Caco-2 (cell line): ENCODE measurements at regions of chr10 and their contacts with region 1.

Region 1: DNA sequence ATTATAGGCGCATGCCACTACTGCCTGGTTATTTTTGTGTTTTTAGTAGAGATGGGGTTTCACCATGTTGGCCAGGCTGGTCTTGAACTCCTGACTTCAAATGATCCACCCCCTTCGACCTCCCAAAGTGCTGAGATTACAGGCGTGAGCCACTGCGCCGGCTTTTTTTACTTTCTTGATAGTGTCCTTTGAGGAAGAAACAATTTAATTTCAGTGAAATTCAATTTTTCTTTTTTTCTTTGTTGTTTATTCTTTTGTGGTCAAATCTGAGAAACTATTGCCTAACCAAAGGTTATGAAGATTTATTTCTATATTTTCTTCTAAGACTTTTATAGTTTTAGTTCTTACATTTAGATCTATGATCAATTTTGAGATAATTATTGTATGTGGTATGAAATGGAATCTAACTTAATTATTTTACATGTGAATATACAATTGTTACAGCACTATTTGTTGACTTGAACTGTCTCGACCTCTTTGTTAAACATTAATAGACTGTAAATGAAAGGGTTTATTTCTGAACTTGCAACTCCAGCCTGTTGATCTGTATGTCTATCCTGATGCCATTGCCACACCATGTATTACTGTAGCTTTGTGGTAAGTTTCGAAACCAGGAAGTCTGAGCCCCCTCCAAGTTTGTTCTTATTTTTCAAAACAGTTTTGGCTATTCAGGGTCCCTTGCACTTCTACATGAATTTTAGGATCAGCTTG is 19.8 kb upstream of the RASSF4 start:
- DNase-seq: peak; percentile 12 to 48
- H3K4me3 ChIP-seq: no peak overlapping the region
- H3K4me3 Mint-ChIP-seq: no peak overlapping the region
- H3K27ac Mint-ChIP-seq: no peak overlapping the region
- H3K4me1 ChIP-seq: peaks cover 10% of the 10 kb centered on the region; the same call in 1 of the 2 replicates
- H3K4me1 Mint-ChIP-seq: peaks cover 12% of the 10 kb centered on the region
- H3K27me3 ChIP-seq: no peaks in the 10 kb centered on the region
- H3K27me3 Mint-ChIP-seq: no peaks in the 10 kb centered on the region
- CTCF ChIP-seq: no peak

Region 2: DNA sequence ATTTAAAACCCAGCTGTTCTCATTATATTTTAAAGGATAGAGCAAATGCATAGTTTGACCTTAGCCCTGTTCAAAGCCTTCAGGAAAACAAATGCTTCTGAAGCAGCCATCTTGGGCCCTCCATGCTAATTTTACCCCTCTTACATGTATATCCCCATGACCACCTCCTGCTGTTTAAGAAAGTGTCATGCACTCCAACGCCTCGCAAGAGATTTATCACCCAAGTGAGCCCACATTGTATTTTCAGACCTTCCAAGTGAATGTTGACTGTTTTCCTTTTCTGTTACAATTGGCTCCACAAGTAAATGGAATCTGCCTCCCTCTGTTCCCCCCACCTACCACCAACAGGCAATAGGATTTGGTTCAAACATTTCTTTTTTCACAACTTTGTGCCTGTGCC is 23.4 kb before region 1 on chr10:
- CTCF ChIA-PET with region 1: no interaction called
- POLR2A ChIA-PET with region 1: no interaction called
- intact Hi-C with region 1: no loop called
- DNase-seq: no peak
- H3K4me3 ChIP-seq: no peak overlapping the region
- H3K4me3 Mint-ChIP-seq: no peak overlapping the region
- H3K27ac Mint-ChIP-seq: no peak overlapping the region
- H3K4me1 ChIP-seq: peaks cover 6% of the 10 kb centered on the region
- H3K4me1 Mint-ChIP-seq: no peaks in the 10 kb centered on the region
- H3K27me3 ChIP-seq: no peaks in the 10 kb centered on the region
- H3K27me3 Mint-ChIP-seq: peaks cover 8% of the 10 kb centered on the region
- CTCF ChIP-seq: no peak

Region 3: DNA sequence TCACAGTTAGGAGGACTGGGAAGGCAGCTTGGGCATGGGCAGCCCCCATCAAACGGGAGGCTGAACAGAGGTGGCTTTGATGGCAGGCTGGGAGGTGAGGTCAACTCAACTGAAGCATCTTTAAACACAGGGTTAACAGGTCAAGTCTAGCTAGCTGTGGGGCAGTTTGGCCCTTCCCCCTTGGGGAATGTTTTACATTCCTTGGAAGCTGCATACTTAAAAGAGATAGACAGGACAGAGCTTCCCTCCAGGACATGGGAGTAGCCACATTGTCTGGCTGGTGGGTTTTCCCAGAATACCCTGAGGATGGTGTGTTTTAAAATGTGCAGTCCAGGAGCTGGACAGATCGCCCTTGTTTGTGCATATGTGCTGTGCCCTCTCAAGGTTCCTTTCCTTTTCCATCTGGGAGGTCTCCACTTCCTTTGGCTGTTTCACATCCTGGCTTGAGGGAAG is 13.0 kb after region 1 on chr10:
- CTCF ChIA-PET with region 1: interaction called, 3 read pairs
- POLR2A ChIA-PET with region 1: no interaction called
- intact Hi-C with region 1: loop called (anchors 1 kb)
- DNase-seq: peak; percentile 76 to 85
- H3K4me3 ChIP-seq: no peak overlapping the region
- H3K4me3 Mint-ChIP-seq: peak overlapping the region; percentile 21
- H3K27ac Mint-ChIP-seq: peak overlapping the region; percentile 8
- H3K4me1 ChIP-seq: peaks cover 55% of the 10 kb centered on the region
- H3K4me1 Mint-ChIP-seq: peaks cover 47% of the 10 kb centered on the region
- H3K27me3 ChIP-seq: no peaks in the 10 kb centered on the region
- H3K27me3 Mint-ChIP-seq: no peaks in the 10 kb centered on the region
- CTCF ChIP-seq: no peak